ENCODE measurements at regions of chr19 and their contacts with region 1.

Region 1: DNA sequence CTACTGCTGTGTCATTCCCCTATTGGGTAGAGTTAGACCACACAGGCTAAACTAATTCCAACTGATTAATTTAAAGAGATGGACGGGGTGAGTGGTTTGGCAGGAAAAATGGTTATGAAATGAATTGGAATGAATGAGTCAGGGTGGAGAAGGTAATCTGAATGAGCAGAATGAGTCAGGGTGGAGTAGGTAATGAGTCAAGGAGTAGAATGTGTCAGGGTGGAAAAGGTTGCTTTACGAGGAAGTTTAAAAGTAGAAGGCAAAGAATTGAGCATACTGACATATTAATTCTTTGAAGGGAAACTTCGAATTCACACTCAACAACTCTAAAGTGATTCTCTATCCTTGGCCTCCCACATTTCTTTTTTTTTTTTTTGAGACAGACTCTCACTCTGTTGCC is 12.7 kb upstream of the ZNF121 start:
- DNase-seq: no peak
- ATAC-seq: no peak
- H3K4me3 ChIP-seq: no peak overlapping the region
- H3K27ac ChIP-seq: no peak overlapping the region
- H3K4me1 ChIP-seq: no peaks in the 10 kb centered on the region
- H3K27me3 ChIP-seq: peaks cover 0 to 6% (median 0%) of the 10 kb centered on the region in 7 donors
- CTCF ChIP-seq: no peak

Region 2: GRCh38 chr19:8840708-8841107 is 756.3 kb before region 1 on chr19:
- intact Hi-C with region 1: no loop called
- DNase-seq: no peak
- ATAC-seq: no peak
- H3K4me3 ChIP-seq: no peak overlapping the region
- H3K27ac ChIP-seq: no peak overlapping the region
- H3K4me1 ChIP-seq: no peaks in the 10 kb centered on the region
- H3K27me3 ChIP-seq: peaks cover 0 to 24% (median 13%) of the 10 kb centered on the region in 7 donors
- CTCF ChIP-seq: no peak

Region 3: DNA sequence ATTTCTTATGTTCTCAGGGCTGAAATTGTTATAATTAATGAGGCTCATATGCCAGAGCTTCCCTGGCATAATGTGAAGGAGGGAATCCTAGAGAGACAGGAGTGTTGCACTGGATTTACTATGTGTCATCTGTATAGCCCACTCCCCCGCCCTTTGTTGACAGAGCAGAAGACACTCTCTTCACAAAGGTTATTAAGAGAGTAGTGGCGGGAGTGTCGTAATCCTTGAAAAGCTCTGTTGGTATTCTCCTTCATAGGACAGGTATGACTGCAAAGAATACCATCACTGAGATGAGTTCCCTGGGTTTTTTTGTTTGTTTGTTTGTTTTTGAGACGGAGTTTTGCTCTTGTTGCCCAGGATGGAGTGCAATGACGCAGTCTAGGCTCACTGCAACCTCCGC is 26.8 kb before region 1 on chr19:
- intact Hi-C with region 1: loop called in 1 of 10 experiments (anchors 1 kb)
- DNase-seq: no peak
- ATAC-seq: no peak
- H3K4me3 ChIP-seq: no peak overlapping the region
- H3K27ac ChIP-seq: no peak overlapping the region
- H3K4me1 ChIP-seq: peaks cover 0 to 6% (median 0%) of the 10 kb centered on the region in 9 donors
- H3K27me3 ChIP-seq: no peaks in the 10 kb centered on the region
- CTCF ChIP-seq: no peak

Measured in heart right ventricle (tissue), 16 donors.